Ascending aorta (tissue), 2 donors: ENCODE measurements at regions of chr7 and their contacts with region 1.

Region 1: GRCh38 chr7:144391823-144392255 is 11.7 kb downstream of the NOBOX start:
- DNase-seq: no peak
- H3K4me3 ChIP-seq: no peak overlapping the region
- H3K27ac ChIP-seq: no peak overlapping the region
- H3K4me1 ChIP-seq: no peaks in the 10 kb centered on the region
- H3K27me3 ChIP-seq: no peaks in the 10 kb centered on the region
- CTCF ChIP-seq: peak; percentile 60 to 75 (median 67)

Region 2: DNA sequence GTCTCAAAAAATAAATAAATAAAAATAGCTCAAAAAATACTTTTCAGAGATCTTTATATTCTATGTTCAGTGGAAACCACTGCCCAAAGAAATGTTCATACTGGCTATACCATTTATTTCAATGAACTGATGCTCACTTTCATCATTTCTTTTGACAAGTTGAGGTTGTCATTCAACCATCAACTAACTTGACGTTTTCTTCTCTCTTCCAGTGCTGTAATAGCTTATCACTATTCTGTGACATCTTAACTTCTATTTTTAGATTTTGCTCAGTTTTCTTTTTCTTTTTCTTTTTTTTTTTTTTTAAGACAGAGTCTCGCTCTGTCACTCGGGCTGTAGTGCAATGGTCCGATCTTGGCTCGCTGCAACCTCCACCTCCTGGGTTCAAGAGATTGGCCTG is 217.2 kb before region 1 on chr7:
- intact Hi-C with region 1: loop called (anchors 5 kb)
- DNase-seq: no peak
- H3K4me3 ChIP-seq: no peak overlapping the region
- H3K27ac ChIP-seq: no peak overlapping the region
- H3K4me1 ChIP-seq: no peaks in the 10 kb centered on the region
- H3K27me3 ChIP-seq: no peaks in the 10 kb centered on the region
- CTCF ChIP-seq: no peak